Naive thymus-derived CD4-positive, alpha-beta T cell (primary cell): ENCODE measurements at regions of chr12 and their contacts with region 1.

Region 1: GRCh38 chr12:69879041-69879960 is 54.3 kb downstream of the MYRFL start:
- DNase-seq: peak; percentile 25 to 64 (median 57)
- ATAC-seq: peak; percentile 94
- H3K4me3 ChIP-seq: no peak overlapping the region
- H3K4me3 Mint-ChIP-seq: peak overlapping the region in 1 of 10 donors; percentile 11
- H3K27ac ChIP-seq: no peak overlapping the region
- H3K27ac Mint-ChIP-seq: no peak overlapping the region
- H3K4me1 ChIP-seq: no peaks in the 10 kb centered on the region
- H3K4me1 Mint-ChIP-seq: peaks cover 0 to 8% (median 4%) of the 10 kb centered on the region in 7 donors
- H3K27me3 ChIP-seq: no peaks in the 10 kb centered on the region
- H3K27me3 Mint-ChIP-seq: peaks cover 14 to 35% (median 26%) of the 10 kb centered on the region in 5 donors

Region 2: DNA sequence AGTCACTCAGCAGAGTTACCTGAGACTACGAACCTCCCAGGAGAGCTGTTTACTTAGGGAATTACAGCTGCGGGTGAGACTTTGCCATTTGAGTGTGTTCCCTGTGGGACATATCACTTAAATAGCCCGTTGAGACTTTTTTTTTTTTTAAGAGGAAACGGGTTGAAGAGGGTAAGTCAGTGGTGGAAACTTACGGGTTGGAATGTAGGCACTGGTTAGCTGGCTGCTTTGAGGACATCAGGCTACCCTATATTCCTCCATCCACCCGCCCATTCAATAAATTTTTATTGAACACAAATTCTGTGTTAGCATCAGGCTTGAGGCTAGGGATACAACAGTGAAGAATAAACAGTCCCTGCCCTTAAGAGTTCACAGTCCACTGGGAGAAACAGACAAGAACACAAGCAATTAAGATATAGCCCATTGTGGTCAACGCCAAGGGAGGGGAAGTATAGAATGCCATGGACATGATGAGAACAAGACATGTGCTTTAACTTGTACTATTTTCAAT is 728.0 kb before region 1 on chr12:
- CTCF ChIA-PET with region 1: no interaction called
- POLR2A ChIA-PET with region 1: no interaction called
- intact Hi-C with region 1: no loop called
- DNase-seq: no peak
- ATAC-seq: no peak
- H3K4me3 ChIP-seq: no peak overlapping the region
- H3K4me3 Mint-ChIP-seq: no peak overlapping the region
- H3K27ac ChIP-seq: no peak overlapping the region
- H3K27ac Mint-ChIP-seq: no peak overlapping the region
- H3K4me1 ChIP-seq: no peaks in the 10 kb centered on the region
- H3K4me1 Mint-ChIP-seq: peaks cover 3 to 17% (median 14%) of the 10 kb centered on the region in 7 donors
- H3K27me3 ChIP-seq: no peaks in the 10 kb centered on the region
- H3K27me3 Mint-ChIP-seq: peaks cover 0 to 3% (median 0%) of the 10 kb centered on the region in 5 donors

Region 3: DNA sequence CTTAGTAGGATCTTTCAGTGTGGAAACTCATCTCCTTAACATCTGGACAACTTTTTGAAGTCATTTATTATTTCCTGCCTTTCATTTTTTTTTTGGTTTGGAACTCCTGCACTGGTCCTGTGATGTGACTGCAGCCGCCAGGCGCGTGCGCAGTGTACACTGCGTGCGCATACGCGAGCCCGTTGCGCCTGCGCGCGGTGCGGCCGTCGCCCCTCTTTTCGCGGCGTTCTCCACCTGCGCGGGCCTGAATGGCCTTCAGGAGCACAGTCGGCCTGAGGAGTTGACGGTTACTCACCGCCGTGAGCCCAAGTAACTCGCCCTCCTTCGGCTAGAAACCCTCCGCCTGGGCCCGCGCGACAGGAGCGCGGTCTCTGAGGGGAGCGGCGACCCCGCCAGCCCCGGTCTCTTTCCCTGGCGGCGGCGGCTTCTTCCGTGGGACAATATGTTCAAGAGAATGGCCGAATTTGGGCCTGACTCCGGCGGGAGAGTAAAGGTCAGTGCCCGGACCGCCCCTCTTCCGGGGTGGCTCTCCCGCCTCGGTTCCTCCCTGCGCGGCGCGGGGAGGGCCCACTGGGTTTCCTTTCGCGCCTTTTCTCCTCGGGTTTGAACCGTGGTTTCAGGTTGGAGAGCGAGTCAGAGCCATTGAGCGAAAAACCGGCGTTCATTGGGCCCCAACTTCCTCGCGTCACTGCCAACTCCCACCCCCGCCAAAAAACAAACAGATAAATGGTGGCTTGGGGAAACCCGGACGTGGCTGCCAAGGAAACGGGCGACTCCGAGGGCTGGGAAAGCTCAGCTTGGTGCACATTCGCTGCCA is 519.6 kb before region 1 on chr12 and contains the start of gene YEATS4:
- CTCF ChIA-PET with region 1: no interaction called
- POLR2A ChIA-PET with region 1: no interaction called
- intact Hi-C with region 1: loop called in 1 of 2 experiments (anchors 5 kb)
- DNase-seq: peak; percentile 73 to 93 (median 84)
- ATAC-seq: peak; percentile 86
- H3K4me3 ChIP-seq: peak within 1 kb of the TSS; percentile 76
- H3K4me3 Mint-ChIP-seq: peak within 1 kb of the TSS; percentile 82 to 93 (median 89)
- H3K27ac ChIP-seq: peak within 1 kb of the TSS; percentile 93
- H3K27ac Mint-ChIP-seq: peak within 1 kb of the TSS; percentile 80 to 96 (median 91)
- H3K4me1 ChIP-seq: peaks cover 5 to 6% of the 10 kb centered on the region in 2 donors
- H3K4me1 Mint-ChIP-seq: peaks cover 11 to 32% (median 25%) of the 10 kb centered on the region in 7 donors
- H3K27me3 ChIP-seq: no peaks in the 10 kb centered on the region
- H3K27me3 Mint-ChIP-seq: peaks cover 0 to 3% (median 0%) of the 10 kb centered on the region in 5 donors
- total RNA-seq, gene YEATS4: 16.5 to 34.9 (median 21.4) TPM

Region 4: DNA sequence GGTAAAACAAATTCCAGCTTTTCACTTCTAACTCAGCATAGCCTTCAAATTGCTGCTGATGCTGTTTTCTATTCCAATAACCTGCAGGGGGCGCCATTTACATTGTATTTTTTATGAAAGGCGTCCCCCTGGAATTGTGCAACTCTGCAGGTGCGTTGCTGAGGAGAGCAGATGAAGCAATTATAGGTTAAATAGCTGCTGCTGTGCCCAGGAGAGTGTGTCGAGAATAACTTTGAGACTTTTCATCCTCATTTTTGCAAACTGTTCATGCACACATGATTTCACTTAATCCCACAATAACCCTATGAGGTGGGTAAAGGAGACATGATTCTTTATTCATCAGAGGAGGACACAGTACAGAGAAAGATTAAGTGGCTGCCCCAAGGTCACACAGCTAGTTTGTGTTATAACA is 21.4 kb after region 1 on chr12:
- CTCF ChIA-PET with region 1: interaction called, 4 read pairs
- POLR2A ChIA-PET with region 1: no interaction called
- intact Hi-C with region 1: loop called in 1 of 2 experiments (anchors 1 kb)
- DNase-seq: peak; percentile 23 to 67 (median 50)
- ATAC-seq: peak; percentile 56
- H3K4me3 ChIP-seq: no peak overlapping the region
- H3K4me3 Mint-ChIP-seq: no peak overlapping the region
- H3K27ac ChIP-seq: no peak overlapping the region
- H3K27ac Mint-ChIP-seq: no peak overlapping the region
- H3K4me1 ChIP-seq: no peaks in the 10 kb centered on the region
- H3K4me1 Mint-ChIP-seq: peaks cover 0 to 2% (median 0%) of the 10 kb centered on the region in 7 donors
- H3K27me3 ChIP-seq: no peaks in the 10 kb centered on the region
- H3K27me3 Mint-ChIP-seq: peaks cover 0 to 4% (median 2%) of the 10 kb centered on the region in 5 donors

Region 5: DNA sequence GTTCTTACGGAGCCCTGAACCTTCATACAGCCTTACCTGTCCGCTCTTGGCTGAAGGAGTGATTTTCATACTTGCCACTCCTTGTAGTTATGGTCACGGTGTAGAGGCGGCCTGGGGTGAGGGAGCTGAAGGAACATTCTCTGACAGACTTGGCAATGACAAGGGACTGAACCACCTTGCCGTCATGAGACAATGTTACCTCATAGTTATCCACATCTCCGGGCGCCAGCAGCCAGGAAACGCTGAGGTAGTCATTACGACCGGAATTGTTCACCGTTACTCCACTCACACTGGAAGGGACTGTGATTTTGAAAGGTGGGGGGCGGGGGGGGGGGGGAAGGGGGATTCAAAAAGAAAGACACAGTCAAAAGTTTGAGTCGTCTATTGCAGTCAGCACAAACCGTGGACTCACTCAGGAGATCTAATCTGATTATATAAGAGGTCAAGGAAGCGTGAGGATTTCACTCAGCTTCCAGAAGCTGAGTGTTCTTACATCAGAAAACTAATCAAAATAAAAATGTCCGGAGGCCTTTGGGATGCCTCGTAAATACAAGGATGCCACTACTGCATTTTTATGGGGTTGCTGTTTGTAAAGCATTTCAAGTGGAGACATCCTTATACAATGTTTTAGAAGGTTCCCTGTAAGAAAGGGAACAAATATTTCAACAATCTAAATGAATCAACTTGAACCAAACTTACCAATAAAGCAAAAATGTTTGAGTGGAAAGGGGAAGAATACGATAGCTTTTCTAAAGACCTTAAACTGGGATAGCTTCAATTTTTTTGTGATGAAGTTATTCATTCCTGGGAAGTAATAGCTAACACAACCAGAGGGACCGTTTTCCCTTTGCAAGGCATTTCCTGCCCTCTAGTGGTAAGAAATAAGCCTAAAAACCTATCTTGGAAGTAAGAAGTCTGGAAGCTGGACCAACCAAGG is 697.3 kb after region 1 on chr12:
- CTCF ChIA-PET with region 1: interaction called, 14 read pairs
- POLR2A ChIA-PET with region 1: no interaction called
- intact Hi-C with region 1: loop called (anchors 1 kb)
- DNase-seq: peak in 6 of 9 donors; percentile 24 to 54 (median 47)
- ATAC-seq: no peak
- H3K4me3 ChIP-seq: no peak overlapping the region
- H3K4me3 Mint-ChIP-seq: no peak overlapping the region
- H3K27ac ChIP-seq: no peak overlapping the region
- H3K27ac Mint-ChIP-seq: no peak overlapping the region
- H3K4me1 ChIP-seq: no peaks in the 10 kb centered on the region
- H3K4me1 Mint-ChIP-seq: no peaks in the 10 kb centered on the region
- H3K27me3 ChIP-seq: no peaks in the 10 kb centered on the region
- H3K27me3 Mint-ChIP-seq: peaks cover 0 to 18% (median 7%) of the 10 kb centered on the region in 5 donors

Region 6: DNA sequence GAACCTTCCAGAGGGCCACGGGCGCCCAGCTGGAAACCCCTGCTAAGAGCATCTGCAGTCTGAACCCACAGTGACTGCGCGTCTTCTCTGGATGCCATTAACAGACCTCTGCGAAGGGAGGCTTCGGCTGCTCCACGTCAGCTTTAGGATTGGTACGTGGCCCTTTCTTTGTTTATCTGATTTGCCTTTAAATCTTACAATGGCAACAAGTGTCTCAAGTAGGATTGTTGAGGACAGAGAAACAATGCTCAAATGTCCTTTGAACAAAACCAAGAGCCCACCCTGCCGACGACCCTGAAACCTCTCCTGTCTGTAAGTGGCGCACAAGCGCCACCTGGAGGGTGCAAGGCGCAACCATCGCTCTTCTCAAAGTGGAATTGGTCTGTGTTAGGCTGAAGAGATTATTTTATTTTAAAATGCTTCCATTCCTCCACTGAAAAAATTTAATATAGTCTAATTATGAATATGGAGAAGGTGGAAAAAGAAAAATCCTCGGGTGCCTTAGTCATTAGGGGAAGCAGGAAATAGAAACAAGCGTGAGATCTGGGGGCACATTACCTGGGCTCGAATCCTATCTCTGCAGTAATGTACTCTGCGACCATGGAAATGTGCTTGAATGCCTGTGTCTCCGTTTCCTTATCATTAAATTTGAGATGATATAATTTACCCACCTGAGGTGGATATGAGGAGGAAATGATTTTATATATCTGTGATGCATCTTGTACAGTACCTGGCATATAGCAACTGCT is 840.5 kb after region 1 on chr12:
- CTCF ChIA-PET with region 1: no interaction called
- POLR2A ChIA-PET with region 1: no interaction called
- intact Hi-C with region 1: loop called in 1 of 2 experiments (anchors 1 kb)
- DNase-seq: peak in 5 of 9 donors; percentile 6 to 36 (median 18)
- ATAC-seq: peak; percentile 67
- H3K4me3 ChIP-seq: no peak overlapping the region
- H3K4me3 Mint-ChIP-seq: peak overlapping the region in 8 of 10 donors; percentile 57 to 77 (median 70)
- H3K27ac ChIP-seq: no peak overlapping the region
- H3K27ac Mint-ChIP-seq: peak overlapping the region in 1 of 9 donors; percentile 53
- H3K4me1 ChIP-seq: no peaks in the 10 kb centered on the region
- H3K4me1 Mint-ChIP-seq: peaks cover 5 to 19% (median 8%) of the 10 kb centered on the region in 7 donors
- H3K27me3 ChIP-seq: no peaks in the 10 kb centered on the region
- H3K27me3 Mint-ChIP-seq: peaks cover 3 to 38% (median 10%) of the 10 kb centered on the region in 5 donors

Region 7: DNA sequence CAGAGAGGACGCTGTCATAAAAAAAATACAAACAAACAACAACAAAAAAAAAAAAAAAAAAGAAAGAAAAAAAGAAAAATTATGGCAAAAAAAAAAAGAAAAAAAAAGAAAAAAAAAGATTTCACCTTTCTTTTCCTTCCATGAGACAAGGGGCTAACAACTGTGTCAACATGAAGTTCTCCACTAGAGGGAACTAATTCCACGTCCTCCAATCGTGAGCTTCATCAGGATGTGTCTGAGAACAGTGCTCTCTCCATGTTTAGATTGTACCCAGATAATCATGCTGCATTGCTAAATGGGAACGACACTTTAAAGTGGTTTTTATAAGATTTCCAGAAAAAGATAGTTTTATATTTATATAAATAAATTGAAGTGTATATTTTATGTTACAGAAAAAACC is 854.1 kb after region 1 on chr12:
- CTCF ChIA-PET with region 1: interaction called, 11 read pairs
- POLR2A ChIA-PET with region 1: no interaction called
- intact Hi-C with region 1: loop called (anchors 1 kb)
- DNase-seq: peak in 2 of 9 donors; percentile 8 to 30
- ATAC-seq: peak; percentile 57
- H3K4me3 ChIP-seq: no peak overlapping the region
- H3K4me3 Mint-ChIP-seq: no peak overlapping the region
- H3K27ac ChIP-seq: no peak overlapping the region
- H3K27ac Mint-ChIP-seq: no peak overlapping the region
- H3K4me1 ChIP-seq: no peaks in the 10 kb centered on the region
- H3K4me1 Mint-ChIP-seq: peaks cover 0 to 2% (median 0%) of the 10 kb centered on the region in 7 donors
- H3K27me3 ChIP-seq: no peaks in the 10 kb centered on the region
- H3K27me3 Mint-ChIP-seq: peaks cover 0 to 23% (median 6%) of the 10 kb centered on the region in 5 donors

Region 8: GRCh38 chr12:71636704-71637115 is 1757.4 kb after region 1 on chr12:
- CTCF ChIA-PET with region 1: no interaction called
- POLR2A ChIA-PET with region 1: no interaction called
- intact Hi-C with region 1: loop called in 1 of 2 experiments (anchors 2 kb)
- DNase-seq: peak in 7 of 9 donors; percentile 27 to 65 (median 58)
- ATAC-seq: peak; percentile 84
- H3K4me3 ChIP-seq: no peak overlapping the region
- H3K4me3 Mint-ChIP-seq: no peak overlapping the region
- H3K27ac ChIP-seq: no peak overlapping the region
- H3K27ac Mint-ChIP-seq: peak overlapping the region in 8 of 9 donors; percentile 8 to 91 (median 59)
- H3K4me1 ChIP-seq: no peaks in the 10 kb centered on the region
- H3K4me1 Mint-ChIP-seq: peaks cover 0 to 18% (median 12%) of the 10 kb centered on the region in 7 donors
- H3K27me3 ChIP-seq: no peaks in the 10 kb centered on the region
- H3K27me3 Mint-ChIP-seq: no peaks in the 10 kb centered on the region